Left ventricle myocardium inferior (tissue), 1 donor: ENCODE measurements at regions of chr16 and their contacts with region 1.

Region 1: GRCh38 chr16:60636117-60636516 is 1400.1 kb downstream of the CDH8 start:
- DNase-seq: no peak
- H3K4me3 ChIP-seq: no peak overlapping the region
- H3K27ac ChIP-seq: no peak overlapping the region
- H3K4me1 ChIP-seq: no peaks in the 10 kb centered on the region
- H3K27me3 ChIP-seq: no peaks in the 10 kb centered on the region
- CTCF ChIP-seq: no peak

Region 2: GRCh38 chr16:60553090-60553757 is 82.9 kb before region 1 on chr16:
- intact Hi-C with region 1: no loop called
- DNase-seq: no peak
- H3K4me3 ChIP-seq: no peak overlapping the region
- H3K27ac ChIP-seq: no peak overlapping the region
- H3K4me1 ChIP-seq: no peaks in the 10 kb centered on the region
- H3K27me3 ChIP-seq: no peaks in the 10 kb centered on the region
- CTCF ChIP-seq: no peak

Region 3: DNA sequence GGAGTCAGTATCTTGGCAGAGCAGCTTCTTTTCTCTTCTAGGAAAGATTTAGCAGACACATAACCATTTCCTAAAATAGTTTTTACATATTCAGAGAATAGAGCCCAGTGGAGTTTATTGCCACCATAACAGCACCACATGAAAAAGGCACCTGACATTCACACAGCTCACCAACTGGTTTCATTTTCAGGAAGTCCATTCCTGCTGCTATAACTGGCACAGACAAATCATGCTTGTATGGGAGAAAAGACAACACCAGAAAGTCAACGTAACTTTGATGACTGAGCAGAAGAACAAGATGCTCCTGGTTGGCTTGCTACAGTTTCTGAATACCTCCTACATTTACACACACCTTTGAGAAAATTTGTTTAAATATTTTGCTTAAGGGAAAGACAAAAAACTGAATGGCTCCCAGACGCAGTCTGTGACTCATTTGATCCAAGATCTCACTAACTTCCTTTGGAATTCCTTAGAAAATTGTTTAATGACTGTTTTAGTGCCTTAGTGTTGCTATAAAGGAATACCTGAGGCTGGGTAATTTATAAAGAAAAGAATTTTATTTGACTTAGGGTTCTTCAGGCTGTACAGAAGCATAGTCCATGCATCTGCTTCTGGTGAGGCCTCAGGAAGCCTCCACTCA is 19.5 kb after region 1 on chr16:
- intact Hi-C with region 1: no loop called
- DNase-seq: no peak
- H3K4me3 ChIP-seq: no peak overlapping the region
- H3K27ac ChIP-seq: no peak overlapping the region
- H3K4me1 ChIP-seq: no peaks in the 10 kb centered on the region
- H3K27me3 ChIP-seq: no peaks in the 10 kb centered on the region
- CTCF ChIP-seq: no peak

Region 4: GRCh38 chr16:60686824-60687223 is 50.7 kb after region 1 on chr16:
- intact Hi-C with region 1: loop called (anchors 10 kb)
- DNase-seq: no peak
- H3K4me3 ChIP-seq: no peak overlapping the region
- H3K27ac ChIP-seq: no peak overlapping the region
- H3K4me1 ChIP-seq: no peaks in the 10 kb centered on the region
- H3K27me3 ChIP-seq: no peaks in the 10 kb centered on the region
- CTCF ChIP-seq: no peak

Region 5: DNA sequence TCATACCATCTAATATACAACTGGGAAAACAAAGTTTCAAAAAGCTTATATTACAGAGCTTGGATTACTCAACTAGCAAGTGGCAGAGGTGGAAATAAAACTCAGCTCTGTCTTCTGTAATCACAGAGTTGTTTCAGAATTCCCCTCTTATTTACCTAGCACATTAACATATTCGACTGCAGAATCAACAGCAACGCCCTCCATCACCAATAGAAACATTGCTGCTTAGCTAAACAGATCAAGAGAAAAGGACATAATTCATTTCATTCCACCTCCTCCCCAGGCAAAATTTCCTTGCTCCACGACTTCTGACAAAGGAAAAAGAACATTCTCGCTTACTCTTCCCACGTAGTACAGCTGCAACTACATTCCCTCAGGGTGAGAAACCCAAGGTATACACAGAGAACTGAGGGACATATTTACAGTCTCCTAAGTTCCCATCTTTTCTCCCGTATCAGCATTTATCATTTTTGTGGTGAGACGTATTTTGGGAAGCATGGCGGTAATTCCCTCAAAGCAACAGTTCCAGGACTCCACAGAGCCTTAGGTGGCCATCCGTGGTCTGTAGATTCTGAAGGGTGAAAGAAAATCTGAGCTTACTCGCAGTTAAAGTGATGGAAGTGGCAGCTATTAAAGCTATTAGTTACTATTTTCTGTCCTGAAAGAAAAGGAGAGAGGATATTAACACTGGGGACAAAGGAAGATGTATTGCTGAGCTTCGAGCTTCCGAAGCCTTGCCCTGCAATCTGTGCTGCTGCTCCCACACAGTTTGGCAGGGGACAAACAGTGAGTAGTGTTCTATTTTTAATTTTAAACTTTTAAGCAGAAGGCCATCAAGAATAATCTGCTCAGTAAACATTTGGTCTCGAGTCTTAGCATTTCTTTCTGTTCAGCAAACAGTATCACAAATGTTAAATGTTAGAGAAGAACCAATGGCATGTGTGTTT is 103.9 kb after region 1 on chr16:
- intact Hi-C with region 1: no loop called
- DNase-seq: no peak
- H3K4me3 ChIP-seq: no peak overlapping the region
- H3K27ac ChIP-seq: no peak overlapping the region
- H3K4me1 ChIP-seq: peaks cover 11% of the 10 kb centered on the region
- H3K27me3 ChIP-seq: no peaks in the 10 kb centered on the region
- CTCF ChIP-seq: no peak